ENCODE measurements at regions of chr20 and their contacts with region 1.

Region 1: GRCh38 chr20:63707549-63708300 is at the starts of genes ARFRP1 and ZGPAT:
- DNase-seq: peak; percentile 82
- H3K4me3 Mint-ChIP-seq: peak within 1 kb of the TSS; percentile 86
- H3K27ac Mint-ChIP-seq: peak within 1 kb of the TSS; percentile 61
- H3K4me1 Mint-ChIP-seq: peaks cover 9% of the 10 kb centered on the region
- H3K27me3 Mint-ChIP-seq: no peaks in the 10 kb centered on the region
- CTCF ChIP-seq: no peak
- total RNA-seq, gene ARFRP1: 60.1 and 65.4 TPM in 2 replicates
- total RNA-seq, gene ZGPAT: 19.5 and 22.2 TPM in 2 replicates

Region 2: GRCh38 chr20:63425846-63426485 is 281.8 kb before region 1 on chr20:
- CTCF ChIA-PET with region 1: no interaction called
- POLR2A ChIA-PET with region 1: no interaction called
- intact Hi-C with region 1: no loop called
- DNase-seq: no peak
- H3K4me3 Mint-ChIP-seq: no peak overlapping the region
- H3K27ac Mint-ChIP-seq: no peak overlapping the region
- H3K4me1 Mint-ChIP-seq: no peaks in the 10 kb centered on the region
- H3K27me3 Mint-ChIP-seq: peaks cover 64% of the 10 kb centered on the region
- CTCF ChIP-seq: no peak

Region 3: DNA sequence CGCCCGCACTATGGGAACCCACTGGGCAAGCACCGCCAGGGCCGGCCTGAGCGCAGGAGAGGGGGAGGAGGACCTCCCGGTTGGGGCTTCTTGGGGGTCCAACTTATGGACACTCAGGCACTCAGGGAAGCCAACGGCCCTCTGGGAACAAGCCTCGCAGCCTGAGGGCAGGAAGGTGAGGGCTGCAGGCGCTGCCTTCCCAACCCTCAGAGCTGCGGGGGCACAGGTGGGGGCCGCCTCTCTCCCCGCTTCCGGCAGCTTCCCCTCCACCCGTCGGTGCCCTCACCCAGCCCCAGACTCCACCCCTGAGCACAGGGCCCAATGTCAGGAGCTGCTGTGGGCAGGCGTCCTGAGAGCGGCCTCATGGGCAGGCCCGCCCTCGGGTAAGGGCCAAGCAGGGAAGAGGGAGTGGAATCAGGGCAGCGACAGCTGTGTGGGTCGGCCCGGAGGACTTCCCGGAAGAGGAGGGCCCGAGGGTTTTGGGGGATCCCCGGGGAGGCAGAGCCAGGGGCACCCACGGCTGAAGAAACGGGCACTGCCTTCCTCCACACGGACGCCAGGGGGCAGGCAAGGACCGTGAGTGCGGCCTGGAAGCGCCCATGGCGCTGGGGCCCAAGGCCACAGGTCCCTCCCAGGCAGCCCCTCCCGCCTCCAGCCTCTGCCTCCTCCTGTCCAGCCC is 170.1 kb before region 1 on chr20:
- CTCF ChIA-PET with region 1: interaction called, 4 read pairs
- POLR2A ChIA-PET with region 1: interaction called, 10 read pairs
- intact Hi-C with region 1: no loop called
- DNase-seq: peak; percentile 99
- H3K4me3 Mint-ChIP-seq: peak overlapping the region; percentile 73
- H3K27ac Mint-ChIP-seq: peak overlapping the region; percentile 92
- H3K4me1 Mint-ChIP-seq: peaks cover 14% of the 10 kb centered on the region
- H3K27me3 Mint-ChIP-seq: no peaks in the 10 kb centered on the region
- CTCF ChIP-seq: peak; percentile 95

Region 4: DNA sequence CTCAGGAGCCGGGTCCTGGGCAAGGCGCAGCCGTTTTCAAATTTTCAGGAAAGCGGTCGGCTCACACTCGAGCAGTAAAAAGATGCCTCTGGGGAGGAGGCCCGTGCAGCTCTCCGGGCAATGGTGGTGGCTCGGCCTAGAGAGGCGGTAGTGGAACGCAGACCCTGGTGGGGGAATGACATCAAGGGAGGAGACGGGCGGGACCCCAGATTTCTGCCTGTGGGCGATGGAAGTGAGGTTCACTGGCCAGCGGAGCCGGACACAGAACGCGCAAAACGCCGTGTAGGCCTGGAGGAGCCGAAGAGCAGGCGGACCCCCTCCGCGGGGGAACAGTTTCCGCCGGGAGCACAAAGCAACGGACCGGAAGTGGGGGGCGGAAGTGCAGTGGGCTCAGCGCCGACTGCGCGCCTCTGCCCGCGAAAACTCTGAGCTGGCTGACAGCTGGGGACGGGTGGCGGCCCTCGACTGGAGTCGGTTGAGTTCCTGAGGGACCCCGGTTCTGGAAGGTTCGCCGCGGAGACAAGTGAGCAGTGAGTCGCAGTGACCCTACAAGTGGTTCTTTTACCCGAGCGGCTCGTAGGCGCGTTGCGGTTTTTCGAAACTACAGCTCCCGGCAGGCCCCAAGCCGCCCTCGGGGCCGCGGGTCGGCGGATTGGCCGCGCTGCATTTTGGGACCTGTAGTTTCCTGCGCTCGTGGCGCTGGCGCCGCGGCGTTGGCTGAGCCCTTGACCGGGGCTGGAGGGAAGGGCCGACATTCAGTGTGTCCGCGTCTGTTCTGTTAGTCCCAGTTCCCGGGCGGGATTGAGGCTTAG is 49.6 kb before region 1 on chr20 and contains the start of gene RTEL1:
- CTCF ChIA-PET with region 1: no interaction called
- POLR2A ChIA-PET with region 1: interaction called, 32 read pairs
- intact Hi-C with region 1: no loop called
- DNase-seq: peak; percentile 88
- H3K4me3 Mint-ChIP-seq: peak within 1 kb of the TSS; percentile 88
- H3K27ac Mint-ChIP-seq: peak within 1 kb of the TSS; percentile 97
- H3K4me1 Mint-ChIP-seq: peaks cover 9% of the 10 kb centered on the region
- H3K27me3 Mint-ChIP-seq: no peaks in the 10 kb centered on the region
- CTCF ChIP-seq: no peak
- total RNA-seq, gene RTEL1: 27.9 and 39.2 TPM in 2 replicates

Region 5: GRCh38 chr20:63718996-63719395 is 11.3 kb after region 1 on chr20:
- CTCF ChIA-PET with region 1: interaction called, 6 read pairs
- POLR2A ChIA-PET with region 1: interaction called, 12 read pairs
- intact Hi-C with region 1: no loop called
- DNase-seq: no peak
- H3K4me3 Mint-ChIP-seq: no peak overlapping the region
- H3K27ac Mint-ChIP-seq: no peak overlapping the region
- H3K4me1 Mint-ChIP-seq: no peaks in the 10 kb centered on the region
- H3K27me3 Mint-ChIP-seq: no peaks in the 10 kb centered on the region
- CTCF ChIP-seq: no peak

Region 6: DNA sequence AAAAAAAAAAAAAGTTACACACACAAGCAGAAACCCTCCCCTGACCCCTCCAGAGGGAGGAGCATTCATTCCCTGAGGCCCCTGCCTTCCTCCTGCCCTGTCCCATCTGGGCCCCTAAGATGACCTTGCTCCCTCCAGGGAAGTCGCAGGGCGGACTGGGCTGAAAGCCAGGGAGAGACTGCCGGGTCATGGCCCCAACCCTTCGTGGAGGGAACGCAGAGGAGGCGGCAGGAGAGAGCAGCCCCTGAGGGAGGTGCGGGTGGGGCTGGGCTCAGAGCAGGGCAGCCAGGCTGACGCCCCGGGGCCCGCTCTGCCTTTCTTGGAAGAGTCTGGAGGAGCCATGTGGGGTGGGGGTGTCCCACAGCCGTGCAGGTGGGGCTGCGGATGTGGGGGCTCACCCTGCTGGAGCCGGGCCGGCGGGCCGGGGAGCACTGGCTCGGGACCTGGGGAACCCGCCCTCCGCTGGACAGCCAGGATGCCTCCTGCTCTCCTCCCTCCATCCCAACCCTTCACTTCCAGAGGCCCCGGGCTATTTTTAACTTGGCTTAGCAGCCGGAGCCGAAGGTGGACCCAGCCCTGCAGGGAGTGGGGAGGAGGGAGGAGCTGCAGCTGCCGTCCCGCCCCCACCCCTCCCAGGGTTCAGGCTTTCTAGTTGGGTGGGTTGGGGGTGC is 138.5 kb after region 1 on chr20:
- CTCF ChIA-PET with region 1: no interaction called
- POLR2A ChIA-PET with region 1: no interaction called
- intact Hi-C with region 1: no loop called
- DNase-seq: peak; percentile 52
- H3K4me3 Mint-ChIP-seq: no peak overlapping the region
- H3K27ac Mint-ChIP-seq: no peak overlapping the region
- H3K4me1 Mint-ChIP-seq: no peaks in the 10 kb centered on the region
- H3K27me3 Mint-ChIP-seq: peaks cover 20% of the 10 kb centered on the region
- CTCF ChIP-seq: no peak

Region 7: GRCh38 chr20:63873477-63873971 is 165.8 kb after region 1 on chr20:
- CTCF ChIA-PET with region 1: interaction called, 4 read pairs
- POLR2A ChIA-PET with region 1: interaction called, 6 read pairs
- intact Hi-C with region 1: loop called (anchors 2 kb)
- DNase-seq: peak; percentile 95
- H3K4me3 Mint-ChIP-seq: peak overlapping the region; percentile 19
- H3K27ac Mint-ChIP-seq: peak overlapping the region; percentile 73
- H3K4me1 Mint-ChIP-seq: peaks cover 6% of the 10 kb centered on the region
- H3K27me3 Mint-ChIP-seq: no peaks in the 10 kb centered on the region
- CTCF ChIP-seq: no peak

Region 8: GRCh38 chr20:63973636-63974402 is 266.1 kb after region 1 on chr20:
- CTCF ChIA-PET with region 1: interaction called, 5 read pairs
- POLR2A ChIA-PET with region 1: interaction called, 3 read pairs
- intact Hi-C with region 1: loop called (anchors 5 kb)
- DNase-seq: peak; percentile 76
- H3K4me3 Mint-ChIP-seq: peak overlapping the region; percentile 61
- H3K27ac Mint-ChIP-seq: no peak overlapping the region
- H3K4me1 Mint-ChIP-seq: peaks cover 31% of the 10 kb centered on the region
- H3K27me3 Mint-ChIP-seq: no peaks in the 10 kb centered on the region
- CTCF ChIP-seq: peak; percentile 98